Activated T-helper 1 cell treated with anti-CD3 and anti-CD28 coated beads, Interleukin-12 subunit alpha, Interleukin-12 subunit beta, Interleukin-2, Interleukin-4 antibody, amounts not matched to agents 30 ng/mL and 10 ng/mL and 1 ng/mL, durations not matched to agents 14 hours and 24 hours and 36 hours (primary cell): ENCODE measurements at regions of chr1 and their contacts with region 1.

Region 1: GRCh38 chr1:40264354-40264781 is 6.3 kb downstream of the ZMPSTE24 start:
- DNase-seq: no peak
- H3K4me3 Mint-ChIP-seq: peak overlapping the region; percentile 58
- H3K27ac Mint-ChIP-seq: peak overlapping the region; percentile 88
- H3K4me1 Mint-ChIP-seq: peaks cover 53% of the 10 kb centered on the region
- H3K27me3 Mint-ChIP-seq: no peaks in the 10 kb centered on the region

Region 2: GRCh38 chr1:40241362-40241761 is 23.0 kb before region 1 on chr1:
- intact Hi-C with region 1: loop called (anchors 1 kb)
- DNase-seq: no peak
- H3K4me3 Mint-ChIP-seq: peak overlapping the region; percentile 23
- H3K27ac Mint-ChIP-seq: peak overlapping the region; percentile 94
- H3K4me1 Mint-ChIP-seq: peaks cover 77% of the 10 kb centered on the region
- H3K27me3 Mint-ChIP-seq: no peaks in the 10 kb centered on the region

Region 3: GRCh38 chr1:41122851-41123507 is 858.6 kb after region 1 on chr1:
- intact Hi-C with region 1: no loop called
- DNase-seq: no peak
- H3K4me3 Mint-ChIP-seq: no peak overlapping the region
- H3K27ac Mint-ChIP-seq: no peak overlapping the region
- H3K4me1 Mint-ChIP-seq: no peaks in the 10 kb centered on the region
- H3K27me3 Mint-ChIP-seq: no peaks in the 10 kb centered on the region